ENCODE measurements at regions of chr10 and their contacts with region 1.

Region 1: DNA sequence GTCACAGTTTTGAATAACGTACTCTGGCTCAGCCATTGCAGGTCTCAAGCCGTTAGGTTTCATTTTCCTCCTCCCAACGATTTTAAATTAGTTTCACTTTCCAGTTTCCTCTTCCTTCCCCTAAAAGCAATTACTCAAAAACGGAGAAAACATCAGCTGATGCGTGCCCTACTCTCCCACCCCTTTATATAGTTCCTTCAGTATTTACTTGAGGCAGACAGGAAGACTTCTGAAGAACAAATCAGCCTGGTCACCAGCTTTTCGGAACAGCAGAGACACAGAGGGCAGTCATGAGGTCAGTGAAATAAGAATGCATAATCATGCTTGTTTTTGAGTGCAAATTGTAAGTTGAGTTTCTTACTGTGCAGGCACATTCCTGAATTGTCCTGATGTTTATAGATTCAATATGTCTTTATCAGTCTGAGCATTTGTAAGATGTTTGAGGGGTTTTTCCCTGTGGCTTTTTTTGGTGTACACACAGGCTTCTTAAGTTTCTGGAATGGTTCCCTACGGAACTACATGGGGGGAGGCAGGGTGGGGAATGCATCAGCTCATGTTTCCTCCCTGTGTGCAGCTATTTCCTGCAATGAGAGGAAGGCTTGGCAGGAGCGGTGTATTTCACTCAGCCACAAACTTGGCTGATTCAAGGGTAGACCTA is at the start of gene IFIT3:
- DNase-seq: peak; percentile 58 to 75
- ATAC-seq: peak; percentile 86 to 95 (median 93)
- H3K4me3 ChIP-seq: peak within 1 kb of the TSS; percentile 60
- H3K27ac ChIP-seq: peak within 1 kb of the TSS; percentile 71
- H3K4me1 ChIP-seq: peaks cover 38% of the 10 kb centered on the region
- H3K27me3 ChIP-seq: no peaks in the 10 kb centered on the region
- CTCF ChIP-seq: no peak
- total RNA-seq, gene IFIT3: 2.7 to 7.1 (median 5.5) TPM

Region 2: DNA sequence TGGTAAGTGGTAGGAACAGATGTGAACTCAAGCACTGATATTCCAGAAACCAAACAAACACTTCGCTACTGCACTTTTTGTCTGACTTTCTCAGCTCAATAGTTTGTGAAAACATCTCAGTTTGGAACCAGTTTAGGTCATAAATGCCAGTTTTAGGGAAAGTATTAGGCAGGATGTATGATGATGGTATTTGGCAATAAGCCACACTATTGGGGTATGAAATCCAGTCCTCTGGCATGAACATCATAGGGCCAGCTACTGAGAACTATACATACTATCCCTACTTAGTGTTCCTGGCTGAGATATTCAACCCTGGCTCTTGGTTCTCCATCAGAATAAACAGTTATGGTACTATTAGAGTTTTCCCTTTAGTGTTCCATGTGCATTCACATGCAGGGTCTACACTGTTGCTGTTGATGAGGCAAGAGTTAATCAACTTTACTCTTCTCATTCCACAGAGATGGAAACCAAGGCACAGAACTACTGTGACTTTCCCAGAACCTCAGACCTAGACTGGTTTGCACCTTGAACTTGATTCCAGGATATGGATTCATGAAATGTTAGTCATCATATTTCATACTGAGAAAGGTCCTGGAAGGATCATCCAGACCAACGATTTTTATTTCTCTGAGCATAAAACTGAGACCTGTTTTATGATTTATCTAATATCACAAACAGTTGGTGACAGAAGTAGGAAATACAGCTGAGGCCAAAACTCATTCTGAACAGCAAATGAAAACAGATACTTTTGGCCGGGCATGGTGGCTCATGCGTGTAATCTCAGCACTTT is 46.1 kb before region 1 on chr10:
- intact Hi-C with region 1: loop called in 1 of 2 experiments (anchors 1 kb)
- DNase-seq: no peak
- ATAC-seq: no peak
- H3K4me3 ChIP-seq: no peak overlapping the region
- H3K27ac ChIP-seq: no peak overlapping the region
- H3K4me1 ChIP-seq: peaks cover 41% of the 10 kb centered on the region
- H3K27me3 ChIP-seq: no peaks in the 10 kb centered on the region
- CTCF ChIP-seq: no peak

Region 3: DNA sequence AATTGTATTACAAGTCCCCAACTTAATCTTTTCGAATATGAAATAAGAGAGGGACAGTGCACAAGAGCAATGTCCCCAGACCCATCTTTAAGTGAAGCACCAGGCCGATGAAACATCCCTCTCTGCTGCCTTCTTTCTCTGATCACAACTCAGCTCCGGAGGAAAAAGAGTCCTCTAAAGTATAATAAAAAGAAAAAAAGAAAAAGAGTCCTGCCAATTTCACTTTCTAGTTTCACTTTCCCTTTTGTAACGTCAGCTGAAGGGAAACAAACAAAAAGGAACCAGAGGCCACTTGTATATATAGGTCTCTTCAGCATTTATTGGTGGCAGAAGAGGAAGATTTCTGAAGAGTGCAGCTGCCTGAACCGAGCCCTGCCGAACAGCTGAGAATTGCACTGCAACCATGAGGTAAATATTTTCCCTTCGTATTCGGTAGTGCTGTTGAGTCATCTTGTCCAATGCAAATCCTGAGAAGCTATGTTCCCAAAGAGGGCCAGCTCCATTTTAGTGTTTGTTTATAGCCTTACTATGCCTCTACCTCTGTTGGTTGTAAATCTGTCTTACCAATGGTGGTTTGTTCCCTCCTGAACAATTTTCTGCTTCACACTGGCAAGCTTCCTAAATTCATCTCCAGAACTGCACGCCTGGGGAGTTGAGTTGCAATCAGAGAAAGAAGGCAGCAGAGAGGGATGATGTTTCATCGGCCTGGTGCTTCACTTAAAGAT is 26.0 kb before region 1 on chr10 and contains the start of gene IFIT2:
- intact Hi-C with region 1: loop called in 1 of 2 experiments (anchors 2 kb)
- DNase-seq: no peak
- ATAC-seq: peak; percentile 79 to 94 (median 89)
- H3K4me3 ChIP-seq: peak within 1 kb of the TSS; percentile 70
- H3K27ac ChIP-seq: peak within 1 kb of the TSS; percentile 92
- H3K4me1 ChIP-seq: peaks cover 24% of the 10 kb centered on the region
- H3K27me3 ChIP-seq: no peaks in the 10 kb centered on the region
- CTCF ChIP-seq: no peak
- total RNA-seq, gene IFIT2: 1.2 to 4.2 (median 1.6) TPM

Measured in psoas muscle (tissue), 8 donors.